Endothelial cell of umbilical vein (primary cell): ENCODE measurements at regions of chr2 and their contacts with region 1.

Region 1: GRCh38 chr2:221529943-221530652 is 42.0 kb downstream of the EPHA4 start:
- DNase-seq: peak; percentile 89
- H3K4me3 ChIP-seq: peak overlapping the region in 1 of 3 experiments; percentile 37
- H3K27ac ChIP-seq: peak overlapping the region; percentile 88
- H3K4me1 ChIP-seq: peaks cover 41% of the 10 kb centered on the region
- H3K27me3 ChIP-seq: no peaks in the 10 kb centered on the region
- CTCF ChIP-seq: no peak
- POLR2A ChIP-seq: no peak

Region 2: GRCh38 chr2:221235941-221236340 is 294.2 kb before region 1 on chr2:
- CTCF ChIA-PET with region 1: no interaction called
- POLR2A ChIA-PET with region 1: no interaction called
- dilution Hi-C with region 1: no loop called
- intact Hi-C with region 1: loop called (anchors 1 kb)
- DNase-seq: peak; percentile 88
- H3K4me3 ChIP-seq: peak overlapping the region in 1 of 3 experiments; percentile 21
- H3K27ac ChIP-seq: peak overlapping the region; percentile 83
- H3K4me1 ChIP-seq: peaks cover 15% of the 10 kb centered on the region
- H3K27me3 ChIP-seq: no peaks in the 10 kb centered on the region
- CTCF ChIP-seq: no peak
- POLR2A ChIP-seq: no peak

Region 3: DNA sequence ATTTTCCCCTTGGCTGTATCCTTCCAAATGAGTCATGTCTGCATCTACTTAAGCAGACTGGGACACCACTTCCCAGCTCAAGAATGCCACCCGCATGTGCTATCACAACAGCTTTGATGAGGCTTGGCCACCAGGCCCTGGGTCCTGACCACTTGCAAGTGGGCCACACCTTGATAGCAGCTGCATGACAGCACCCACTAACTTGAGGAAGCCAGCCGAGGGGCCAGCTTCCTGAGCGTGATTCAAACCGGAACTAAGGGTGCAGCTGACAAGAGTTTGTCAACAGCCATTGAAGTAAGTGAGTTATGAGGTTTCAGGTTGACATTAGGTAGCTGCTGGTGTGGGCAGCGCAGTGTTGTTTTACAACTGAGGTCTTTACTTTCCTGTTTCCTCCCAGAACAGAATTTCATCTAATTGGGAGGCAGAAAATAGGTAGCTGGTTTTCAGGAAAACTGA is 12.4 kb before region 1 on chr2:
- CTCF ChIA-PET with region 1: interaction called, 5 read pairs
- POLR2A ChIA-PET with region 1: interaction called, 5 read pairs
- dilution Hi-C with region 1: no loop called
- intact Hi-C with region 1: loop called (anchors 1 kb)
- DNase-seq: peak; percentile 72
- H3K4me3 ChIP-seq: no peak overlapping the region
- H3K27ac ChIP-seq: peak overlapping the region; percentile 70
- H3K4me1 ChIP-seq: peaks cover 33% of the 10 kb centered on the region
- H3K27me3 ChIP-seq: no peaks in the 10 kb centered on the region
- CTCF ChIP-seq: no peak
- POLR2A ChIP-seq: no peak